Calu3 (cell line): ENCODE measurements at regions of chr1 and their contacts with region 1.

Region 1: GRCh38 chr1:109193653-109194590 is 19.8 kb upstream of the SARS1 start:
- DNase-seq: peak; percentile 74
- H3K4me3 Mint-ChIP-seq: no peak overlapping the region
- H3K27ac Mint-ChIP-seq: no peak overlapping the region
- H3K4me1 Mint-ChIP-seq: peaks cover 18% of the 10 kb centered on the region
- H3K27me3 Mint-ChIP-seq: no peaks in the 10 kb centered on the region
- CTCF ChIP-seq: peak; percentile 72

Region 2: GRCh38 chr1:109112652-109113285 is 81.2 kb before region 1 on chr1:
- CTCF ChIA-PET with region 1: no interaction called
- intact Hi-C with region 1: loop called (anchors 5 kb)
- DNase-seq: peak; percentile 91
- H3K4me3 Mint-ChIP-seq: peak overlapping the region; percentile 62
- H3K27ac Mint-ChIP-seq: peak overlapping the region; percentile 70
- H3K4me1 Mint-ChIP-seq: peaks cover 27% of the 10 kb centered on the region
- H3K27me3 Mint-ChIP-seq: peaks cover 73% of the 10 kb centered on the region
- CTCF ChIP-seq: peak; percentile 65

Region 3: DNA sequence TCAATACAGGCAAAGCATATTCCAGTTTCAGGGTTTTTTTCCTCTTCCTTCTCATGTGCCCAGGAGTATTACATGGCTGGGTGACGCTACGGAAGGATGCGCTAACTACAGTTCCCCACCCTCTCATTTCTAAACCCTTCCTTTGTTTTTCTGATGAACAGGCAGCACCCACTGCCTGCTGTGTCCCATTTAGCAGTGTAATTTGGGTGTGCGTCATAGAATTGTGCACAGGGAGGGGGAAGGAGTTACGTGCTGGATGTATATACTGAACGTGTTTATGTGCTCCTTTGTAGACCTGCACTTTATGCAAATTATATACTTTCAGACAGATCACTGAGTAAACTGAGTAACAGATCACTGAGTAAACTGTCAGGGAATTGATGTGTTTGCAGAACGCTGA is 35.5 kb before region 1 on chr1:
- CTCF ChIA-PET with region 1: no interaction called
- intact Hi-C with region 1: loop called (anchors 5 kb)
- DNase-seq: no peak
- H3K4me3 Mint-ChIP-seq: no peak overlapping the region
- H3K27ac Mint-ChIP-seq: no peak overlapping the region
- H3K4me1 Mint-ChIP-seq: no peaks in the 10 kb centered on the region
- H3K27me3 Mint-ChIP-seq: peaks cover 12% of the 10 kb centered on the region
- CTCF ChIP-seq: no peak

Region 4: GRCh38 chr1:109397538-109398342 is 203.8 kb after region 1 on chr1 and contains the start of gene SORT1:
- CTCF ChIA-PET with region 1: no interaction called
- intact Hi-C with region 1: loop called (anchors 10 kb)
- DNase-seq: peak; percentile 85
- H3K4me3 Mint-ChIP-seq: peak within 1 kb of the TSS; percentile 78
- H3K27ac Mint-ChIP-seq: no peak within 1 kb of the TSS
- H3K4me1 Mint-ChIP-seq: peaks cover 31% of the 10 kb centered on the region
- H3K27me3 Mint-ChIP-seq: no peaks in the 10 kb centered on the region
- CTCF ChIP-seq: no peak
- total RNA-seq, gene SORT1: 46.3 and 68.2 TPM in 2 replicates